Heart right ventricle (tissue), 16 donors: ENCODE measurements at regions of chr3 and their contacts with region 1.

Region 1: DNA sequence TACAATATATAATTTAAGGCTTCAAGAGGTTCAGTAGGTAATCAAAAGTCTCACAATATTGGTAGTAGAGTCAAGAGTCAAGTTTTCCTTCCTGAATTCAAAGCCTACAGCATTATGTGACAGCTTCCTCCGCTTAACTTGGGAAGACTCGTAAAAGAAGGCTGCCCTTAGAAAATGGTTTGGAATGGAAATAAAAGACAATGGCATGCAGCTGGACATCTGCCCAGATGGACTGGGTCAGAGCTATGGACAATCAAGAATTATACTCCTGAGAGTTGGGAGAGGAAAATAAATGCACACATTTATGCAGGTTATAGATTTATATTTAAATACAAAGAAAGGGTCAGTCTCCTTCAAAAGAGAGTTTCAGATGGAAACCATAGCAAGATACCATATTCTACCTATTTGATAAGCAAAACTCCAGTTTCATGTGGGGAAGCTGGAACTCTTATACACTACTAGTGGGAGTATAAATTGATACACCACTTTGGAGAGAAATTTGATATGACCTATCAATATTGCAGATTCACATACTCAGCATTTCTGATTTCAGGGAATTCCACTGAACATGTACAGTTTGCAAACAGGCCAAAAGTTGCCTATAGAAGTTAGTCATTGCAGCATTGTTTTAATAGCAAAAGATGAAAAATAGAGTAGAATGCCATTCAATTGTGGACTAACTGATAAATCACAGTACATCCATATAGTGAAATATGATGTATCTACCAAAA is 6.1 kb downstream of the CRYBG3 start:
- DNase-seq: no peak
- ATAC-seq: no peak
- H3K4me3 ChIP-seq: no peak overlapping the region
- H3K27ac ChIP-seq: peak overlapping the region in 1 of 10 donors; percentile 27
- H3K4me1 ChIP-seq: peaks cover 4 to 78% (median 61%) of the 10 kb centered on the region in 9 donors
- H3K27me3 ChIP-seq: no peaks in the 10 kb centered on the region
- CTCF ChIP-seq: no peak

Region 2: DNA sequence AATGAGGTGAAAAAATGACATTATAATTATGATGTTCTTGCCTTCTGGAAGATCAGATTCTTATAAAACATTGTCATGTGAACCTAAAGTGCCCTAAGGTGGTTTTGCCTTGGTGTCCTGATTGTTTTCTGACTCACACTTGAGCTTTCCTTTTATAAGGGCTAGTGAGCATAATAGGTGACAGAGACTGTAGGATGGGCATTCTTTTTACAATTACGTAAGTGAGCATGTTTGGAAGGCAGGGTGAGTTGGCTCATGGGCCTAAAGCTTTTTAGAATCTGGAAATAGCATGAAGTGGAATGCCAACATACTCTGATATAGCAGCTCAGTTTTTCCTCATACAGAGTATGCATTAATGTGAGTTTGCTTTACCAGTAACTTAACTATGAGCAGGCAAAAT is 35.1 kb after region 1 on chr3:
- intact Hi-C with region 1: loop called in 3 of 10 experiments (anchors 2 to 5 kb)
- DNase-seq: peak in 1 of 2 donors; percentile 12
- ATAC-seq: peak in 7 of 8 donors; percentile 64 to 98 (median 84)
- H3K4me3 ChIP-seq: no peak overlapping the region
- H3K27ac ChIP-seq: peak overlapping the region in 6 of 10 donors; percentile 18 to 67 (median 52)
- H3K4me1 ChIP-seq: peaks cover 0 to 47% (median 18%) of the 10 kb centered on the region in 9 donors
- H3K27me3 ChIP-seq: no peaks in the 10 kb centered on the region
- CTCF ChIP-seq: no peak

Region 3: DNA sequence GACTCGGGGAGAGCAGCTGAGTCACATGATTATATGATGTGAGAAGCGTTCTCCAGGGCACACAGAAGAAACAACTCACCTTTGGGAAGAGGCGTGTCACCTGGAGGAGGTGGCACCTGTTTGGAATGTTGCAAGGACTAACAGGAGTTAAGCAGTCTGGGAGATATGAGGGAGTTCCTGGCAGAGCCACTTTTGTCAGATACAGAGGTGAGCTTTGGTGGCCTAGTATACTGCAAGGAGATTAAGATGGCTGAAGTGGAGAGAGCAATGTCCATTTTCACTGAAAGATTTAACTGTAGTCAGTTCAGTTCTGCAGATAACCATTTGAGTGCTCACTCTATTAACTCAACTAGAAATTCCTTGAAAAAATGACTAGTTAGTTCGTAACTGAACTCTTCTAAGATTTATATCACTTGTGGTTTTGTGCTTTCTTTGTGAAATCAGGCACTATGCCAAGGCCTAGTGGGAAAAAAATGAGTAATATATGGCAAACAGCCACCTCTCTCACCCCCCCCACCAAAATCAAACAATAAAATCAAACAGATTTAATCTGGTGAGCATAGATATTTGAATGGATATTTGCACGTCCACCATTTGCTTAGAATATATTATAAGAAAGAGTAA is 55.2 kb after region 1 on chr3:
- intact Hi-C with region 1: loop called in 4 of 10 experiments (anchors 5 to 10 kb)
- DNase-seq: peak in 1 of 2 donors; percentile 16
- ATAC-seq: peak in 4 of 8 donors; percentile 13 to 53 (median 28)
- H3K4me3 ChIP-seq: no peak overlapping the region
- H3K27ac ChIP-seq: peak overlapping the region in 8 of 10 donors; percentile 32 to 77 (median 54)
- H3K4me1 ChIP-seq: peaks cover 0 to 51% (median 35%) of the 10 kb centered on the region in 9 donors
- H3K27me3 ChIP-seq: no peaks in the 10 kb centered on the region
- CTCF ChIP-seq: no peak